Motor neuron (in vitro differentiated cells): ENCODE measurements at regions of chr17 and their contacts with region 1.

Region 1: GRCh38 chr17:7989781-7990655 is 12.4 kb upstream of the GUCY2D start:
- ATAC-seq: peak; percentile 85 to 92 (median 90)
- H3K4me3 ChIP-seq: peak overlapping the region; percentile 39 to 62 (median 46)
- H3K27ac ChIP-seq: no peak overlapping the region
- H3K4me1 ChIP-seq: no peaks in the 10 kb centered on the region

Region 2: GRCh38 chr17:7745748-7746470 is 244.1 kb before region 1 on chr17:
- in situ Hi-C with region 1: loop called in 1 of 9 experiments (anchors 25 kb)
- ATAC-seq: peak in 6 of 8 experiments; percentile 7 to 75 (median 36)
- H3K4me3 ChIP-seq: no peak overlapping the region
- H3K27ac ChIP-seq: no peak overlapping the region
- H3K4me1 ChIP-seq: no peaks in the 10 kb centered on the region

Region 3: DNA sequence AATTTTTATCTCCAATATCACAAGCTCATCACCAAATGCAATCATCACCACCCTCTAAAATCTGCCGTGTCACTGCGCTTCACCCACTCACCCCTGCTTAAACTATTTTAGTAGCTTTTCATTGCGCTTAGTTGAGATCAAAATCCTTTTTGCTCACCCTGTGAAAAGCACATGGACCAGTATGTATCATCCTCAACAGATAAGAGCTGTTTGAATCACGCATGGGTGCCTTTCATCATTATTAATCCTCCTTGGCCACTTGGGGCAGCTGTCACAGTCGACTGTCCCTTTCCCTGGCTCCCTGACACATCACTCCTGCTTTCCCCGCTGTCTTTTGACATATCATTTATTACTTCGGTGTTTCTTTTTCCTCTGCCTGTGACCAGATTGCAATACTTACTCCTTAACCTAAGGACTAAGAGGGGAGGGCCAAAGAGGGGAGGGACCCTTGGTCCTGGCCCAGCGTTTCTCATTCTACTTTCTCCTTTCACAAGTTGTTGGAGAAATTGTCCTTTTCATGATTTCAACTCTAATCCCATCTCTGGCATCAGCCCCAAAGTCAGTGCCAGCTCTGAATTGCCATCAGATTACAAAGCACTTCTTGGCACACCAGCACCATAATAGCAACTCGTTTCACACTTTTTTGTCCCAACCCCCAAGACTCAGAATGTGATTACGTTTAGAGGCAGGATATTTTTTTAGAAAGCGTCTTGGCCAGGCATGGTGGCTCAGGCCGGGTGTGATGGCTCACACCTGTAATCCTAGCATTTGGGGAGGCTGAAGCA is 164.6 kb before region 1 on chr17:
- in situ Hi-C with region 1: loop called in 1 of 9 experiments (anchors 10 kb)
- ATAC-seq: peak in 7 of 8 experiments; percentile 51 to 96 (median 90)
- H3K4me3 ChIP-seq: no peak overlapping the region
- H3K27ac ChIP-seq: no peak overlapping the region
- H3K4me1 ChIP-seq: peaks cover 4 to 7% of the 10 kb centered on the region in 2 donors

Region 4: GRCh38 chr17:7889166-7889955 is 100.7 kb before region 1 on chr17:
- in situ Hi-C with region 1: no loop called
- ATAC-seq: peak in 5 of 8 experiments; percentile 2 to 36 (median 15)
- H3K4me3 ChIP-seq: peak overlapping the region in 1 of 5 donors; percentile 96
- H3K27ac ChIP-seq: peak overlapping the region; percentile 81 to 82
- H3K4me1 ChIP-seq: peaks cover 20 to 22% of the 10 kb centered on the region in 2 donors

Region 5: DNA sequence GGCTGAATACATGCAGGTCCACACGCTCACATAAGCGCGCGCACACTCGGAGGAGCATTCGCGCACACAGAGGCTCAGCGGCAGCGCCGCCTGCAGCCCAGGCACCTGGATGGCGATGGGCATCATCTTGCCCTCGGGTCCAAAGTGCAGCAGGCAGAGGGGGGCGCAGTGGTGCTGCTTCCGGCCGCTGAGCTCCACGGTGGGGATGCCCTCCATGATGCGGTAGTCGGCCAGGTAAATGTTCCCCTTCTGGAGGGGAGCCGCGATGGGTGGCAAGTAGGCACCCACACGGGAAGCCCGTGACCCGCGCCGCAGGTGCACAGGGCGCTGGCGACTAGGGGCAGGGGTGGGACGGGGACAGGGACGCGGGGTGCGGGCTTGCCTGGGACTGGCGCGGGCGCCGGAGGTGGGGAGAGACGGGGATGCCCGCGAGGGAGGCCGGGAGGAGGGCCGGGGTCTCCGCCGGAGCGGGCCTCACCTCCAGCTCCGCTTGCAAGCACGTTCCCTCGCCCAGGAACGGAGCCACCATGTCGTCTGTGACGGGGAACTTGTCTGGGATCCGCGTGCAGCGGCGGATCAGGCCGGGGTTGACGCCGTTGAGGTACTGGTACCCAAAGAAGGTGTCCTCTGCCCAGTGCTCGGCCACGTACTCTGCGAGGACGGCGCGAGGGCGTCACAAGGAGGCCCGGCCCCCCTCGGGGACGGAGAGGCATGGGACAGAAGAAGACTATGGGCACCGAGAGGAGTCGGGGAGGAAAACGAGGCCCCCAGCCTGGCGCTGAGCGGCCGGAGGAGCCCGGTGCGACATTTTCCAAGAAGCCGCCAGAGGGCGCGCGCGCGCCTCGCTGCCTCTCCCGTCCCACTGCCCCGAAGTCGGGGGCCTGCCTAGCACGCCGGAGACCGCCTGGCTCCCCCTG is 89.5 kb after region 1 on chr17:
- in situ Hi-C with region 1: no loop called
- ATAC-seq: peak; percentile 88 to 94 (median 90)
- H3K4me3 ChIP-seq: peak overlapping the region; percentile 18 to 38 (median 36)
- H3K27ac ChIP-seq: no peak overlapping the region
- H3K4me1 ChIP-seq: no peaks in the 10 kb centered on the region